ENCODE measurements at regions of chr17 and their contacts with region 1.

Region 1: DNA sequence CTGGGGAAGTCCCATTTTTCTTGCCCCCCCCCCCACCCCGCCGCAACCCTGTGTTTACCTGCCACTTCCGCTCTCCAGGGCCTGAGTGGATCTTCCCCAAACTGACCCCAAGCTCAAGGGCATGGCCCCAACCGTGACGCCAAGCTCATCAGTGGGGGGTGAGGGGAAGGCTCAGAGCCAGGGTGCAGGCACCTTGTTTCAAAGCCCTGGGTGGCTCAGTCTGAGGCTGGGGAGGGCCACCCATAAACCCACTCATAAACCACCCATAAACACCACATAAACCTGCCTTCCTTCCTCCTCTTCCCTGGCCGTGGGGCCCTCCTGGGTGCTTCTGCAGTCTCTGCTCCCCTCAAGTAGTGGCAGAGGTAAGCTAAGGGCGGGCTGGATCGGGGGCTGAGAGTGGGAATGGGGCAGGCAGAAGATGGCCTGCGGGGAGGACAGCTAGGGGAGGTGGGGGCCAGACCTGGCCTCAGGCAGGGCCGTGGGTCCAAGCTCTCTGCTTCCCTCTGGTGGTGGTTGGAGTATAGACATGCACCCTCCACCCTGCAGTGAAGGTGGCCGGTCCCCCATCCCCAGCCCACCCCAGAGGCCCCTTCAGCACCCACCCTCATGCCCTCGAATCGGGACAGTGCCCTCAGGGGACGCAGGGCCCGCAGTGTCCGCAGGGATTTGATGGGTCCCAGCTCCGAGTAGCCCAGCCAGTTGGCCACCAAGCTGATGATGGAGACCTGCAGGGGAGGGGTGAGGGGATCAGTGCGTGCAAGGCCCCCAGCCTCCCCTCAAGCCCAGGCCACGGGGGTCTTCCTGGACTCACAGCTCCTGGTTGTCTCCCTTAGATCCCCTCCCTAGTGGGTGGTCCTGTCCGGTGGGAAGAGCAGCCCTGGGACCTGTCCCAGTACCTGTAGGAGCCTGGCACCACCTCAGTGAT is 14.6 kb upstream of the CD79B start:
- DNase-seq: peak; percentile 91
- H3K4me3 ChIP-seq: no peak overlapping the region
- H3K27ac ChIP-seq: no peak overlapping the region
- H3K4me1 ChIP-seq: no peaks in the 10 kb centered on the region
- H3K27me3 ChIP-seq: no peaks in the 10 kb centered on the region; the same call in 1 of the 2 replicates
- CTCF ChIP-seq: peak; percentile 77
- EP300 ChIP-seq: no peak
- RAD21 ChIP-seq: peak; percentile 50

Region 2: GRCh38 chr17:63848834-63849700 is 97.6 kb before region 1 on chr17:
- CTCF ChIA-PET with region 1: no interaction called
- POLR2A ChIA-PET with region 1: no interaction called
- DNase-seq: peak; percentile 66
- H3K4me3 ChIP-seq: no peak overlapping the region; a peak in 1 of 4 replicates
- H3K27ac ChIP-seq: no peak overlapping the region
- H3K4me1 ChIP-seq: no peaks in the 10 kb centered on the region
- H3K27me3 ChIP-seq: peaks cover 2% of the 10 kb centered on the region; the same call in 1 of the 2 replicates
- CTCF ChIP-seq: no peak
- EP300 ChIP-seq: no peak
- RAD21 ChIP-seq: no peak

Region 3: DNA sequence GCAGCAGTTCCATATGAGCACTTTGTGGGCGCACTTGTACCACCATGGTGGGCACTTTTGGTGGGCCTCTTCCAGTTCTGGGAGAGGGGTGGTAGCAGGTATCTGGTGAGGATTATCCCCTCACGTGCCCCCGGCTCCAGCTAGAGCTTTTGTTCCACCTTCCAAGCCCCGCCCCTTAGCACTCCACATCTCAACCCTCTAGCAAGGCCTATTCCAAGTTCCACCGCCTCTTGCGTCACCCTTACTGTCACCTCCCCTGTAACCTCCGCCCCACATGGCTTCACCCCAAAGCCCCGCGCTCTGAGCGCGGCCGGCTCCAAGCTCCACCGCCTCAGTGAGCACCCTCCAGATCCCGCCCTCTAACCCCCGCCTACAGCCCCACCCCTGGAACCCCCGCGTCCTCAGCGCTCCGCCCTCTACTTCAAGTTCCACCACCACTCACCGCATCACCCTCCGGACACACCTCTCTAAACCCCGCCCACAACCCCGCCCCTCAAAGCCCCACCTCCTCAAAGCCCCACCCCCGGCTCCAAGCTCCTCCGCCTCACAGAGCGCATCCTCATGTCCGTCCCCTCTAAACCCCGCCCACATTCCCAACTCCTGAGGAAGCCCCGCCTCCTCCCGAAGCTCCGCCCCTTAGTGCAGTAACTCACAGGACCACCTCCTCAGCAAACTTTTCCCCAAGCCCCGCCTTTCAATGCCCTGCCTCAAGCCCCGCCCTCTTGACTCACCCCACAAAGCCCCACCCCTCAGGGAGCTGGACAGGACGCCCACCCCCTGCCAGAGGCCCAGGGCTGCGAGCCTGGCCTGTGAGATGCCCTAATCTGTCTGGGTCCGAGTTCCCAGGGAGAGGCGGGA is 14.9 kb after region 1 on chr17:
- CTCF ChIA-PET with region 1: interaction called, 69 read pairs
- POLR2A ChIA-PET with region 1: no interaction called
- DNase-seq: peak; percentile 79
- H3K4me3 ChIP-seq: no peak overlapping the region
- H3K27ac ChIP-seq: no peak overlapping the region
- H3K4me1 ChIP-seq: no peaks in the 10 kb centered on the region
- H3K27me3 ChIP-seq: no peaks in the 10 kb centered on the region
- CTCF ChIP-seq: no peak
- EP300 ChIP-seq: no peak
- RAD21 ChIP-seq: no peak

Region 4: DNA sequence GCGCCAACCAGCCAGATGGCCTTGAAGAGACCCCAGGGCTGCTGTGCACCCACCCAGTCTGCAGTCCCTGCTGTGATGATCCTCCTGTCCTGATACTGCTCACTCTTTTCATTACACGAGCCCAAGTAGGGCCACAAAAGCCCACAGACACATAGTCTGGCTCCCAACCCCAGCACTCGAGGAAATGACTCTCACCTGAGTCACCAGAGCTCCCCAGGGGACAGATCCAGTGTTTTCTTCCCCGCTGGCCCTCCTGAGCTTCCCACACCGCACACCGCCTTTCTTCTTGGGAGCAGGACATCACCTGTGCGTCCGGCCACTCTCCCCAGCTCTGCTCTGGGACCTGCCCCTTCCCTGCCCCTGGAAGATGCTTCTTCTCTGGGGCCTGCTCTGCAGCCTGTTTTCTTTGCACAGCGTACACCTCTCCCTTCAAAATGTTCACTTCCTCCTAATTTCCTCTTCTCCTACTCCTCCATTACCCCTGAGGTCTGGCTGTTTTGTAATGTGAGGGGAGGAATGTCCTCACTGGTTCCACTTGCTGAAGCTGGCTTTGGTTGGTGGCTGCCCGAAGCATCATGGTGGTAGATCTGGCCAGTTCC is 28.0 kb after region 1 on chr17:
- CTCF ChIA-PET with region 1: interaction called, 14 read pairs
- POLR2A ChIA-PET with region 1: no interaction called
- DNase-seq: no peak
- H3K4me3 ChIP-seq: peak overlapping the region in 1 of 2 experiments; percentile 0; a peak in 1 of 4 replicates
- H3K27ac ChIP-seq: peak overlapping the region in 1 of 2 experiments; percentile 16; a peak in 1 of 4 replicates
- H3K4me1 ChIP-seq: peaks cover 8 to 12% of the 10 kb centered on the region in 2 experiments; a peak in 3 of 4 replicates
- H3K27me3 ChIP-seq: no peaks in the 10 kb centered on the region
- CTCF ChIP-seq: no peak
- EP300 ChIP-seq: no peak
- RAD21 ChIP-seq: no peak

Region 5: DNA sequence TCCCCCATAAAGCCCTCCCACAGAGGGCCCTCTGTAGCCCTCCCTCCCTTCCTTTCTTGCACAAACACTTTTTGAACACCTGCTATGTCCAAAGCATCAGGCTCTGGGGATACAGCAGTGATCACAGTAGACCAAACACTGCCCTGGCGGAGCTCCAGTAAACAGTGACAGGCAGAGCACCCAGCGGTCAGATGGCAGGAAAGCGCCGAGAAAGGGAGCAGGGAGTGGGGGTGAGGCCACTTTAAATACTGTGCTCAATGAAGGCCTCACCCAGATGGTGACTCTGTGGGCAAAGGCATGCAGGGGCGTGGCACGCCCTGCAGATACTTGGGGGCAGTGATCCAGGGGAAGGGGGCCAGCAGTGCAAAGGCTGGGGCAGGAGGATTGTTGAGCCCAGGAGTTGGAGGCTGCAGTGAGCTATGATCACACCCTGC is 59.0 kb after region 1 on chr17:
- CTCF ChIA-PET with region 1: interaction called, 19 read pairs
- POLR2A ChIA-PET with region 1: no interaction called
- DNase-seq: peak; percentile 76
- H3K4me3 ChIP-seq: no peak overlapping the region
- H3K27ac ChIP-seq: peak overlapping the region in 1 of 2 experiments; percentile 53; a peak in 1 of 4 replicates
- H3K4me1 ChIP-seq: peaks cover 0 to 22% of the 10 kb centered on the region in 2 experiments; a peak in 1 of 4 replicates
- H3K27me3 ChIP-seq: no peaks in the 10 kb centered on the region
- CTCF ChIP-seq: no peak
- EP300 ChIP-seq: no peak
- RAD21 ChIP-seq: no peak

Measured in SK-N-SH (cell line).